Esophagus muscularis mucosa (tissue), 4 donors: ENCODE measurements at regions of chr5 and their contacts with region 1.

Region 1: GRCh38 chr5:160021831-160022446 is 13.0 kb downstream of the TTC1 start:
- DNase-seq: no peak
- H3K4me3 ChIP-seq: no peak overlapping the region
- H3K27ac ChIP-seq: no peak overlapping the region
- H3K4me1 ChIP-seq: peaks cover 6 to 30% (median 22%) of the 10 kb centered on the region in 4 donors
- H3K27me3 ChIP-seq: no peaks in the 10 kb centered on the region
- CTCF ChIP-seq: peak; percentile 75 to 88 (median 86)
- EP300 ChIP-seq: no peak
- POLR2A ChIP-seq: no peak

Region 2: DNA sequence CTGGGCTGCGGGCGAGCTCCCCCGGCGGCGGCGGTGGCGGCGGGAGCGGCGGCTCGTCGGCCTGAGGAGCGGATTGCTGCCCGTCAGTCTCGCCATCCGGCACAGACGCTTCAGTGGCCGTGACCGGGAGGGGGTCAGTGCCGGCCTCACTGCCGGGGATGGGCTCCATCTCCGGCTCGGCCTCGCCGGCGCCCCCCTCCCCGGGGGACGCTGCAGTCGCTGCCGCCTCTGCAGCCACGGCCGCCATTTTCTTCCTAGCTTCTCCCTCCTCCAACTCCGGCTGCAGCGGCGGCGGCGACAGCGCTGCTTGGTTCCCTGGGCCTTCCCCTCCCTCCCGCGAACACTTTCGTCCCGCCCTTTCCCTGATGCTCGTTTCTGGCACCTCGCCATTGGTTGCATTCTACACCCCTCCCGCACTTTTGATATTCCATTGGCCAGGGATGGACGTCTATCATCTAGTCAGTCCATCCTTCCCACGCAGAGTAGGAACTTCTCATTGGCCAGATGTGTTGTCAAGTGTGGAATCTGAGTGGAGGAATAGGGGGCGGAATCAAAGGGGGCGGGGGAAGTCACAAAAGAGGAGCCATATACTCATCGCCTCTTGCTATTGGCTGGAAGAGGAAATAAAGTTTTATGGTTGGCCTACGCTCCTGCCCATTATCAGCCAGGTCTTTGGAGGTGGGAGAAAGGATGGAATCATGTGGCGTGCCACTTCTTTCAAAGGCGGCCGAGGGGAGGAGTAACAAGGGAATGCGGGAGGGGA is 97.4 kb after region 1 on chr5 and contains the start of gene PWWP2A:
- intact Hi-C with region 1: loop called (anchors 5 kb)
- DNase-seq: peak; percentile 100
- H3K4me3 ChIP-seq: peak within 1 kb of the TSS; percentile 85 to 98 (median 88)
- H3K27ac ChIP-seq: peak within 1 kb of the TSS; percentile 96 to 99 (median 98)
- H3K4me1 ChIP-seq: peaks cover 9 to 23% (median 20%) of the 10 kb centered on the region in 4 donors
- H3K27me3 ChIP-seq: no peaks in the 10 kb centered on the region
- CTCF ChIP-seq: peak in 1 of 3 experiments; percentile 25
- EP300 ChIP-seq: no peak
- POLR2A ChIP-seq: peak; percentile 63
- total RNA-seq, gene PWWP2A: 17.2 to 30.3 (median 24.2) TPM

Region 3: GRCh38 chr5:160199410-160199911 is 177.5 kb after region 1 on chr5:
- intact Hi-C with region 1: loop called (anchors 5 kb)
- DNase-seq: no peak
- H3K4me3 ChIP-seq: peak overlapping the region; percentile 44 to 62 (median 52)
- H3K27ac ChIP-seq: no peak overlapping the region
- H3K4me1 ChIP-seq: peaks cover 11 to 13% (median 11%) of the 10 kb centered on the region in 4 donors
- H3K27me3 ChIP-seq: no peaks in the 10 kb centered on the region
- CTCF ChIP-seq: peak; percentile 87 to 98 (median 95)
- EP300 ChIP-seq: no peak
- POLR2A ChIP-seq: no peak

Region 4: GRCh38 chr5:160342403-160342941 is 320.5 kb after region 1 on chr5:
- intact Hi-C with region 1: loop called (anchors 2 kb)
- DNase-seq: no peak
- H3K4me3 ChIP-seq: no peak overlapping the region
- H3K27ac ChIP-seq: no peak overlapping the region
- H3K4me1 ChIP-seq: peaks cover 0 to 8% (median 7%) of the 10 kb centered on the region in 4 donors
- H3K27me3 ChIP-seq: no peaks in the 10 kb centered on the region
- CTCF ChIP-seq: no peak
- EP300 ChIP-seq: no peak
- POLR2A ChIP-seq: no peak